AG04449 (cell line): ENCODE measurements at regions of chr3 and their contacts with region 1.

Region 1: GRCh38 chr3:111967651-111968274 is 11.1 kb upstream of the ABHD10 start:
- DNase-seq: peak; percentile 65
- H3K4me3 ChIP-seq: no peak overlapping the region
- CTCF ChIP-seq: peak; percentile 87

Region 2: DNA sequence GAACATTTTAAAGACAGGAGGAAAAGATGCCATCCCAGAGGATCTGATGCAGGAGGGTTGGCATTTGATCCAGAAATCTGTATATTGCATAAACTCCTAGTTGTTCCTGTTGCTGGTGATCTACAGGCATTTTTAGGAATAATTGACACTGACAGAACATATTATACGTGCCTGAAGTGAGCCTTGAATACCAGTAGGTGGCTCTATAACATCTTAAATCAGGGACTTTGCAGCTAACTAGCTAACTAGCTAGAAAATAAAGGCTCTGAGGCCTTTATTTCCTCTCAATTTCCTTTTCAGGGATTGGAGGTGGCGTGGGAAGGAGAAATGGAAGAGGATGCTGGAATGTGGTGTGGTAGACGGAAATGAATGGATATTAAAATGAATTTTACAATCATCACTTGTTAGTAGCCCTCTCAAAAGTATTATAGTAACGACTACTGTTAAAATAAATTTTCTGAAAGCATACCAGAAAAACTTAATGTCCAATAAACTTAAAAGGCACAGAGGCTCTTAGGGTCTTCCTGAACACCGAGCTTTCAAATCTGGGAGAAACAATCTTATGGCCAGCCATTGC is 298.8 kb before region 1 on chr3:
- CTCF ChIA-PET with region 1: interaction called, 33 read pairs
- POLR2A ChIA-PET with region 1: no interaction called
- DNase-seq: no peak
- H3K4me3 ChIP-seq: no peak overlapping the region
- CTCF ChIP-seq: peak; percentile 58

Region 3: DNA sequence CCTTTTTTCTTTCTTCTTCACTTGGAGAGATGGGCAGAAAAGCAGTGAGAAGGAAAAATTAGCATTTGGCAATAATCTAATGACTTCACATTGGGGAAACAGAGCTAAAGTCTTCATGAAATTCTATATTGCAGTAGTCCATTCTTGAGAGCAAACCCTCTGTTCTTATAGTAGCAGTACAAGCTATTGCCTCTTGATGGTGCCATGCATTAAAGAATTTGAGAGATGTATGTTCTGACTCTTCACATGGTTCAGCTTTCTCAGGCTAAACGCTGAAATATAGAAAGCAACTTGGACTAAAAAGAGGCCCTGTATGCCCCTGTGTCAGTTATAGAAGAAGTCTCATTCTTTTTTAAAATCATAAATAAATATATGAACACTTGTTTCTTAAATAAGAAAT is 72.7 kb before region 1 on chr3:
- CTCF ChIA-PET with region 1: interaction called, 111 read pairs
- POLR2A ChIA-PET with region 1: no interaction called
- DNase-seq: no peak
- H3K4me3 ChIP-seq: no peak overlapping the region
- CTCF ChIP-seq: peak; percentile 36

Region 4: GRCh38 chr3:111956995-111957734 is 10.6 kb before region 1 on chr3:
- CTCF ChIA-PET with region 1: interaction called, 133 read pairs
- POLR2A ChIA-PET with region 1: no interaction called
- DNase-seq: no peak
- H3K4me3 ChIP-seq: no peak overlapping the region
- CTCF ChIP-seq: no peak

Region 5: DNA sequence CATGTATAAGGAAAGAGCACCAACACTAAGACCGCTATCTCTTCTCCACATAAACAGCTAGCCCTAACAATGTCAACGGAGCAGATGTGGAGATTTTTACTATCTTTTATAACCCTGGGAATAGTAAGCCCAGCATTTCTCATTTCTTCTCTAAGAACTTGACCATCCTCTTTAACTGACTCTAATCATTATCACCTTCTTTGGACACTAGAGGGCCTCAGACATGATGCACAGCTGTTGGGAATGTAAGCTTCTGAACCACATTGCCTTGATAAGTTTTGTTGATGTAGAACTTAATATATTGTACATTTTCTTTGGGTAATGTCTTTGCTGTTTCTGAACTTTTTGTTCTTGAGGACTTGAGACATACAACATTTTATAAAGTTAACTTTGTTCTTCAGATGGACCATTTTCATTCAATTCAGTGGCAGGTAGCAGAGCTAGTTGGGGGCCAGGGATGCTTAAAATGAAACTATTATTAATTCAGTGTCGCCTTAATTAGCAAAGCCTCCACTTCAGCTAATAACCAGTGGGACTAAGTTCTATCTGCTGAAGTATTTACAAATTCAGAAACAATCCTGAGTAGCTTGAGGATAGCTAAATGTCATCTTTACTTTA is 21.4 kb after region 1 on chr3:
- CTCF ChIA-PET with region 1: interaction called, 56 read pairs
- POLR2A ChIA-PET with region 1: no interaction called
- DNase-seq: peak; percentile 49
- H3K4me3 ChIP-seq: no peak overlapping the region
- CTCF ChIP-seq: peak; percentile 70